ENCODE measurements at regions of chr7 and their contacts with region 1.

Region 1: GRCh38 chr7:74625446-74625845 is 32.1 kb upstream of the GTF2I start:
- DNase-seq: no peak
- H3K4me3 ChIP-seq: no peak overlapping the region
- H3K27ac ChIP-seq: no peak overlapping the region
- H3K4me1 ChIP-seq: peaks cover 6% of the 10 kb centered on the region
- H3K27me3 ChIP-seq: no peaks in the 10 kb centered on the region
- CTCF ChIP-seq: peak; percentile 6 to 30

Region 2: DNA sequence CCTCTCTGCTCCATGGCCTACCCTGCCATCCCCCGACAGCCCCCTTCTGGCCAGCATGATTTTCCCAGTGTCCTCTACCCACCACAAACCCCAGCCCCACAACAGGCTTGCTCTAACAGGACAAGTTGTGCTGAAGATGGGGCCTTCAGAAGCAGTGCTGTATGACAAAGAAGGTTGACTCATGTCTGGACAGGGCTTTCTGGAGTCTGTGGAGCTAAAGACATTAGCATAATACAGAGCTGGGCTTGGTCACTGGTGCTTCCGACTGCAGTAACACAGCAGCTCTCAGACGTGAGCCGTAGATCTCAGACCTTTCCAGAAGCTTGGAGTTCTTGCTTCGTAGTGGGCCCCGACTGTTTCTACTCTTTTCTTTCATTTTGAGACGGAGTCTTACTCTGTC is 71.3 kb before region 1 on chr7:
- CTCF ChIA-PET with region 1: no interaction called
- dilution Hi-C with region 1: loop called (anchors 5 kb)
- in situ Hi-C with region 1: no loop called
- intact Hi-C with region 1: no loop called
- DNase-seq: no peak
- H3K4me3 ChIP-seq: no peak overlapping the region
- H3K27ac ChIP-seq: no peak overlapping the region
- H3K4me1 ChIP-seq: no peaks in the 10 kb centered on the region
- H3K27me3 ChIP-seq: no peaks in the 10 kb centered on the region
- CTCF ChIP-seq: no peak

Region 3: DNA sequence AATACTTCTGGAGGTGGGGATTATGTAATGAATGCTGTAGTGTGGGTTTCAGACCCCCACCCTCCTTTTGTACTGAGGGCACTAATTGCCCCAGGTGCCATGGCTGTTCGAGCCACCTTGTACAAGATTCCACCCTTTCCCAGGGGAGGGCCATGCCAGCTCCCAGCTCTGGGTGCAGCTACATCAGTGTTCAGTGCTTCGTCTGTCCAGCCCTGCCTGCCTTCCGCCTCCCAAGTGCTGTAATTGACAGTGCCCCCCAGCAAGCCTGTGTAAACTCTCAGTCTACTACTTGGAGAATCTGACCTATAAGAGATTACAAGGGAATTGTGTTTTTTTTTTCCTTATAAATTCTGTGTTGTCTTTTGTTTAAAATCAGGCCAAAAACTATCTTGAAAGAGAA is 65.0 kb after region 1 on chr7:
- CTCF ChIA-PET with region 1: no interaction called
- dilution Hi-C with region 1: loop called (anchors 5 kb)
- in situ Hi-C with region 1: no loop called
- intact Hi-C with region 1: no loop called
- DNase-seq: no peak
- H3K4me3 ChIP-seq: no peak overlapping the region
- H3K27ac ChIP-seq: no peak overlapping the region
- H3K4me1 ChIP-seq: no peaks in the 10 kb centered on the region
- H3K27me3 ChIP-seq: no peaks in the 10 kb centered on the region
- CTCF ChIP-seq: no peak

Measured in mammary epithelial cell (primary cell).